CD4-positive, alpha-beta memory T cell (primary cell): ENCODE measurements at regions of chr1 and their contacts with region 1.

Region 1: GRCh38 chr1:225999227-225999911 is at the start of gene SDE2:
- DNase-seq: peak; percentile 99 to 100 (median 100)
- H3K4me3 ChIP-seq: peak within 1 kb of the TSS; percentile 78 to 99
- H3K4me3 Mint-ChIP-seq: peak within 1 kb of the TSS; percentile 99 to 100 (median 100)
- H3K27ac ChIP-seq: peak within 1 kb of the TSS; percentile 98
- H3K27ac Mint-ChIP-seq: peak within 1 kb of the TSS; percentile 100
- H3K4me1 ChIP-seq: peaks cover 81% of the 10 kb centered on the region
- H3K4me1 Mint-ChIP-seq: peaks cover 44 to 78% (median 61%) of the 10 kb centered on the region in 4 donors
- H3K27me3 ChIP-seq: no peaks in the 10 kb centered on the region
- H3K27me3 Mint-ChIP-seq: no peaks in the 10 kb centered on the region
- total RNA-seq, gene SDE2: 21.1 to 21.2 TPM

Region 2: GRCh38 chr1:225447650-225448089 is 551.7 kb before region 1 on chr1:
- CTCF ChIA-PET with region 1: no interaction called
- POLR2A ChIA-PET with region 1: interaction called, 23 read pairs
- intact Hi-C with region 1: no loop called
- DNase-seq: no peak
- H3K4me3 ChIP-seq: no peak overlapping the region
- H3K4me3 Mint-ChIP-seq: no peak overlapping the region
- H3K27ac ChIP-seq: no peak overlapping the region
- H3K27ac Mint-ChIP-seq: peak overlapping the region in 1 of 7 donors; percentile 17
- H3K4me1 ChIP-seq: peaks cover 47% of the 10 kb centered on the region
- H3K4me1 Mint-ChIP-seq: peaks cover 29 to 55% (median 43%) of the 10 kb centered on the region in 4 donors
- H3K27me3 ChIP-seq: no peaks in the 10 kb centered on the region
- H3K27me3 Mint-ChIP-seq: no peaks in the 10 kb centered on the region

Region 3: GRCh38 chr1:225720937-225721336 is 278.4 kb before region 1 on chr1:
- CTCF ChIA-PET with region 1: no interaction called
- POLR2A ChIA-PET with region 1: no interaction called
- intact Hi-C with region 1: no loop called
- DNase-seq: no peak
- H3K4me3 ChIP-seq: no peak overlapping the region
- H3K4me3 Mint-ChIP-seq: no peak overlapping the region
- H3K27ac ChIP-seq: no peak overlapping the region
- H3K27ac Mint-ChIP-seq: no peak overlapping the region
- H3K4me1 ChIP-seq: no peaks in the 10 kb centered on the region
- H3K4me1 Mint-ChIP-seq: no peaks in the 10 kb centered on the region
- H3K27me3 ChIP-seq: no peaks in the 10 kb centered on the region
- H3K27me3 Mint-ChIP-seq: peaks cover 0 to 2% of the 10 kb centered on the region in 2 donors

Region 4: GRCh38 chr1:225896937-225897549 is 102.3 kb before region 1 on chr1:
- CTCF ChIA-PET with region 1: no interaction called
- POLR2A ChIA-PET with region 1: interaction called, 13 read pairs
- intact Hi-C with region 1: no loop called
- DNase-seq: peak; percentile 87 to 92 (median 88)
- H3K4me3 ChIP-seq: peak overlapping the region in 1 of 2 donors; percentile 13
- H3K4me3 Mint-ChIP-seq: peak overlapping the region; percentile 72 to 92 (median 82)
- H3K27ac ChIP-seq: peak overlapping the region; percentile 72
- H3K27ac Mint-ChIP-seq: peak overlapping the region; percentile 94 to 99 (median 98)
- H3K4me1 ChIP-seq: peaks cover 45% of the 10 kb centered on the region
- H3K4me1 Mint-ChIP-seq: peaks cover 34 to 65% (median 46%) of the 10 kb centered on the region in 4 donors
- H3K27me3 ChIP-seq: no peaks in the 10 kb centered on the region
- H3K27me3 Mint-ChIP-seq: no peaks in the 10 kb centered on the region

Region 5: GRCh38 chr1:225987491-225988316 is 11.7 kb before region 1 on chr1:
- CTCF ChIA-PET with region 1: interaction called, 29 read pairs
- POLR2A ChIA-PET with region 1: interaction called, 17 read pairs
- intact Hi-C with region 1: loop called (anchors 1 kb)
- DNase-seq: peak in 4 of 5 donors; percentile 27 to 45 (median 40)
- H3K4me3 ChIP-seq: no peak overlapping the region
- H3K4me3 Mint-ChIP-seq: no peak overlapping the region
- H3K27ac ChIP-seq: no peak overlapping the region
- H3K27ac Mint-ChIP-seq: peak overlapping the region in 5 of 7 donors; percentile 37 to 80 (median 51)
- H3K4me1 ChIP-seq: peaks cover 19% of the 10 kb centered on the region
- H3K4me1 Mint-ChIP-seq: peaks cover 17 to 37% (median 27%) of the 10 kb centered on the region in 4 donors
- H3K27me3 ChIP-seq: no peaks in the 10 kb centered on the region
- H3K27me3 Mint-ChIP-seq: no peaks in the 10 kb centered on the region

Region 6: GRCh38 chr1:226083302-226084101 is 84.1 kb after region 1 on chr1:
- CTCF ChIA-PET with region 1: no interaction called
- POLR2A ChIA-PET with region 1: interaction called, 16 read pairs
- intact Hi-C with region 1: no loop called
- DNase-seq: peak; percentile 84 to 92 (median 89)
- H3K4me3 ChIP-seq: peak overlapping the region; percentile 36 to 69
- H3K4me3 Mint-ChIP-seq: peak overlapping the region; percentile 85 to 98 (median 90)
- H3K27ac ChIP-seq: peak overlapping the region; percentile 48
- H3K27ac Mint-ChIP-seq: peak overlapping the region in 6 of 7 donors; percentile 28 to 87 (median 78)
- H3K4me1 ChIP-seq: peaks cover 14% of the 10 kb centered on the region
- H3K4me1 Mint-ChIP-seq: peaks cover 4 to 11% (median 7%) of the 10 kb centered on the region in 4 donors
- H3K27me3 ChIP-seq: no peaks in the 10 kb centered on the region
- H3K27me3 Mint-ChIP-seq: no peaks in the 10 kb centered on the region

Region 7: GRCh38 chr1:226186124-226187018 is 187.0 kb after region 1 on chr1 and contains the start of gene ACBD3:
- CTCF ChIA-PET with region 1: no interaction called
- POLR2A ChIA-PET with region 1: interaction called, 4 read pairs
- intact Hi-C with region 1: loop called (anchors 2 kb)
- DNase-seq: peak; percentile 82 to 91 (median 84)
- H3K4me3 ChIP-seq: peak within 1 kb of the TSS; percentile 98 to 99
- H3K4me3 Mint-ChIP-seq: peak within 1 kb of the TSS; percentile 92 to 98 (median 95)
- H3K27ac ChIP-seq: peak within 1 kb of the TSS; percentile 70
- H3K27ac Mint-ChIP-seq: peak within 1 kb of the TSS; percentile 90 to 97 (median 95)
- H3K4me1 ChIP-seq: peaks cover 43% of the 10 kb centered on the region
- H3K4me1 Mint-ChIP-seq: peaks cover 23 to 40% (median 31%) of the 10 kb centered on the region in 4 donors
- H3K27me3 ChIP-seq: no peaks in the 10 kb centered on the region
- H3K27me3 Mint-ChIP-seq: no peaks in the 10 kb centered on the region
- total RNA-seq, gene ACBD3: 28.7 to 29.7 TPM